ENCODE measurements at regions of chr2 and their contacts with region 1.

Region 1: DNA sequence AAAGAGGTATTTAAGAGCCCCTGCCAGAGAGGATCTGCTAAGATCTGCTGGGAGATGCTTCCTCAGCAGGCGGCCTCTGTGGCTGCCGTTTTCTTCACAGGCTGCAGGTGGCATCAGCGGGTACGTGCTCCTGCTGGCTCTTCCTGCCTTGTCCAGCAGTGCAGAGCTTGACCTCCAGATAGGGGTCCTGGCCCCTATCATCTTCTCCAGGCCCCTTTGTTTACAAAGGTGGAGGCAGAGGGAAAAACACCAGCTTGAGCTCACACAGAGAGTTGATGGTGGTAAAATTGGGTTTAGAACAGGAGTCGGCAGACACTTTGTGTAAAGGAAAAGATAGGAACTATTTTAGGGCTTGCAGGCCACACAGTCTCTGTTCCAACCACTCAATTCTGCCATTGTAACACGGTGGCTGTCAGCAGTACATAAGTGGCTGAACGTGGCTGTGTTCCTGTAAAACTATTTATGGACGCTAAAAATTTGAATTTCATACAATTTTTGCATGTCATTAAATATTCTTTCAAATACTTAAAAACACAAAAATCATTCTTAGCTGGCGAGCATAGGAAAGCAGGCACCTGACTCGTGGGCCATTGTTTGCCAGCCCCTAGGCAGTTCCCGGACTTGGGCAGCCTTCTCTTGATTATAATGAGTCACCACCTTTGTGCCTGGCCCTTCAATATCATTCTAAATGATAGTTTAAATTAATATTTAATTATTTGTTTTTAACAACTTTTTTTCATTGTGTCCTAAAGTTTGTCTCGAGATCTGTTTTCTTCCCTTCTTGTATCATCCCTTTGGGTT is 98.2 kb upstream of the B3GNT7 start:
- DNase-seq: peak; percentile 52
- H3K4me3 ChIP-seq: no peak overlapping the region
- H3K27ac ChIP-seq: no peak overlapping the region
- H3K4me1 ChIP-seq: peaks cover 18% of the 10 kb centered on the region
- H3K27me3 ChIP-seq: no peaks in the 10 kb centered on the region
- CTCF ChIP-seq: peak; percentile 63 to 88
- POLR2A ChIP-seq: no peak

Region 2: GRCh38 chr2:231364961-231365810 is 67.9 kb after region 1 on chr2:
- CTCF ChIA-PET with region 1: interaction called, 4 read pairs
- POLR2A ChIA-PET with region 1: no interaction called
- dilution Hi-C with region 1: no loop called
- intact Hi-C with region 1: loop called (anchors 2 kb)
- DNase-seq: peak; percentile 92
- H3K4me3 ChIP-seq: no peak overlapping the region
- H3K27ac ChIP-seq: peak overlapping the region; percentile 66
- H3K4me1 ChIP-seq: peaks cover 11% of the 10 kb centered on the region
- H3K27me3 ChIP-seq: no peaks in the 10 kb centered on the region
- CTCF ChIP-seq: no peak
- POLR2A ChIP-seq: no peak

Region 3: GRCh38 chr2:231399853-231400680 is 102.8 kb after region 1 on chr2:
- CTCF ChIA-PET with region 1: interaction called, 77 read pairs
- POLR2A ChIA-PET with region 1: interaction called, 3 read pairs
- dilution Hi-C with region 1: no loop called
- intact Hi-C with region 1: loop called (anchors 1 kb)
- DNase-seq: peak; percentile 26
- H3K4me3 ChIP-seq: no peak overlapping the region
- H3K27ac ChIP-seq: no peak overlapping the region
- H3K4me1 ChIP-seq: no peaks in the 10 kb centered on the region
- H3K27me3 ChIP-seq: peaks cover 0 to 3% of the 10 kb centered on the region in 2 experiments
- CTCF ChIP-seq: peak in 1 of 2 donors; percentile 5
- POLR2A ChIP-seq: no peak

Region 4: GRCh38 chr2:231411831-231412617 is 114.7 kb after region 1 on chr2:
- CTCF ChIA-PET with region 1: interaction called, 77 read pairs
- POLR2A ChIA-PET with region 1: no interaction called
- dilution Hi-C with region 1: no loop called
- intact Hi-C with region 1: loop called (anchors 1 kb)
- DNase-seq: peak; percentile 81
- H3K4me3 ChIP-seq: peak overlapping the region; percentile 18 to 73 (median 21)
- H3K27ac ChIP-seq: no peak overlapping the region
- H3K4me1 ChIP-seq: peaks cover 3% of the 10 kb centered on the region
- H3K27me3 ChIP-seq: no peaks in the 10 kb centered on the region
- CTCF ChIP-seq: peak; percentile 91 to 97
- POLR2A ChIP-seq: no peak

Region 5: DNA sequence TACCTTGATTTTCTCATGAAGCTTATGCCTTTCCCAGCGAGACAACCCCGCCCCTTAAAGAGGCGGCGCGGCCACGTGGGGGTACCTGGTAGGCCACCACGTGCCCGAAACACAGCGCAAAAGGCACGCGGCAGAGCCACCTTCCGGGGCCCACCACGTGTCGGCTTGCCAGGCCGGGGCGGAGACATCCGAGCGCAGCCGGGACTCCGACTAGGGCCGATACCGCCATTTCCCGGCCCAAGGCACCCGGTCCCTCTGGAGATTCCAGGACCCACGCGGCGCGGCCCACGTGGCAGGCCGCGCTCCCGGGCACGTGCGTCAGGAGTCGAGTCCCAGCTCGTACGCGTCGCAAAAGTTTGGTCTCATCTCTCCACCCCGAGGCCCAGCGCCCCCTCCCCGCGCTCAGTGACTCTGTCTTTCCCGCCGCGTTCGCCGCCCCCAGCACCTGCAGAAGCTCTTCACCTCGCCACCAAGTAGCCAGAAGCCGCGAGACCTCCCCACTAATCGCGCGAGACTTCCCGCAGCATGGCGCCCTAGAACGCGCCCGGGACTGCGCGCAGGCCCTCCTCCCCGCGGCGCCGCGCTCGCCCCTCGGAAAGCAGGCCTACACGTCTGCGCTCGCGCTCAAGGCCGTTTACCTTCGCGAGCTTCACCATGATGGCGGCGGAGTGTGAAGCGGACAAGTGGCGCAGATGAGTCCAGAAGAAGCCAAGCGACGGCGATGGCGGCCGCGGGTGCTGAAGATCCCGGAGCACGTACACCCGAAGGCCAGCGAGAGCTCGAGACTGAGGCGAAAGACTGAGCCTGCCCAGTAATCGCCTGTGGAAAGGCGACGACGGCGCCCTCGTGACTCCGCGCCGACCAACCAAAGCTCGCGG is 166.6 kb after region 1 on chr2 and contains the start of gene NCL:
- CTCF ChIA-PET with region 1: no interaction called
- POLR2A ChIA-PET with region 1: no interaction called
- dilution Hi-C with region 1: no loop called
- intact Hi-C with region 1: no loop called
- DNase-seq: peak; percentile 99
- H3K4me3 ChIP-seq: peak within 1 kb of the TSS; percentile 93 to 99 (median 96)
- H3K27ac ChIP-seq: peak within 1 kb of the TSS; percentile 79
- H3K4me1 ChIP-seq: peaks cover 20% of the 10 kb centered on the region
- H3K27me3 ChIP-seq: no peaks in the 10 kb centered on the region
- CTCF ChIP-seq: no peak
- POLR2A ChIP-seq: peak; percentile 99
- total RNA-seq, gene NCL: 701 and 708 TPM in 2 replicates